ENCODE measurements at regions of chrX and their contacts with region 1.

Region 1: GRCh38 chrX:77910108-77910840 is at the start of gene ATP7A:
- DNase-seq: peak; percentile 95
- H3K4me3 ChIP-seq: peak within 1 kb of the TSS; percentile 57 to 67 (median 62)
- H3K27ac ChIP-seq: peak within 1 kb of the TSS; percentile 77 to 86 (median 81)
- H3K4me1 ChIP-seq: peaks cover 0 to 20% (median 11%) of the 10 kb centered on the region in 4 donors
- H3K27me3 ChIP-seq: peaks cover 0 to 7% (median 0%) of the 10 kb centered on the region in 4 donors
- CTCF ChIP-seq: peak; percentile 56 to 73 (median 61)
- EP300 ChIP-seq: no peak
- POLR2A ChIP-seq: no peak
- total RNA-seq, gene ATP7A: 10.7 to 14.1 (median 12.8) TPM

Region 2: DNA sequence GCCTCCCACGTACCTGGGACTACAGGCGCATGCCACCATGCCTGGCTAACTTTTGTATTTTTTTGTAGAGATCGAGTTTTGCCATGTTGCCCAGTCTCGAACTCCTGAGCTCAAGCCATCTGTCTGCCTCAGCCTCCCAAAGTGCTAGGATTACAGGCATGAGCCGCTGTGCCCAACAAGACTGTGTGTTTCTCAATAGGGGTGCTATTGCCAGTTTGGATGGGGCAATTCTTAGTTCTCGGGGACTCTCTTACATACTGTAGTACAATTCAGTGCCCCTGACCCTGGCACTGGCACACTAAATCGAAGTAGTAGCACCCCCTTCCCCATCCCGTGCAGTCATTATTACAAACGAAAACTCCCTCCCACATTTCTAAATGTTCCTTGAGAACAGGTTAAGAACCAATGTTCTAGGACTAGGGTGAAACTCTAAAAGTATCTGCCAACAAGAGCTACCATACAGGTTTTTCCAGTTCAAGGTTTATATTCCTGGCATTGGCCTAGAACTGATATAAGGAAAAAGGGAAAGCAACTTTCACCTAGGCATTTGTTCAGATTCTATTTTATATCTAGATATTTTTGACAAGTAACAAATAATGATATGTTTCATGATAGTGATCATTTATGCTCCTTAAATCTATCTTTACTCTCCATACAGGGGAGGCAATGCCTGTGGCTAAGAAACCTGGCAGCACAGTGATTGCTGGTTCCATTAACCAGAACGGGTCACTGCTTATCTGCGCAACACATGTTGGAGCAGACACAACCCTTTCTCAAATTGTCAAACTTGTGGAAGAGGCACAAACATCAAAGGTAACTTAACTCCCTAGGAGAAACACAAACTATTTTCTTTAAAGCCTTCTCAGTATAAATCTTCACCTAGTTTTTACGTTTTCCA is 109.6 kb after region 1 on chrX:
- intact Hi-C with region 1: loop called (anchors 5 kb)
- DNase-seq: no peak
- H3K4me3 ChIP-seq: no peak overlapping the region
- H3K27ac ChIP-seq: no peak overlapping the region
- H3K4me1 ChIP-seq: no peaks in the 10 kb centered on the region
- H3K27me3 ChIP-seq: no peaks in the 10 kb centered on the region
- CTCF ChIP-seq: no peak
- EP300 ChIP-seq: no peak
- POLR2A ChIP-seq: no peak

Region 3: DNA sequence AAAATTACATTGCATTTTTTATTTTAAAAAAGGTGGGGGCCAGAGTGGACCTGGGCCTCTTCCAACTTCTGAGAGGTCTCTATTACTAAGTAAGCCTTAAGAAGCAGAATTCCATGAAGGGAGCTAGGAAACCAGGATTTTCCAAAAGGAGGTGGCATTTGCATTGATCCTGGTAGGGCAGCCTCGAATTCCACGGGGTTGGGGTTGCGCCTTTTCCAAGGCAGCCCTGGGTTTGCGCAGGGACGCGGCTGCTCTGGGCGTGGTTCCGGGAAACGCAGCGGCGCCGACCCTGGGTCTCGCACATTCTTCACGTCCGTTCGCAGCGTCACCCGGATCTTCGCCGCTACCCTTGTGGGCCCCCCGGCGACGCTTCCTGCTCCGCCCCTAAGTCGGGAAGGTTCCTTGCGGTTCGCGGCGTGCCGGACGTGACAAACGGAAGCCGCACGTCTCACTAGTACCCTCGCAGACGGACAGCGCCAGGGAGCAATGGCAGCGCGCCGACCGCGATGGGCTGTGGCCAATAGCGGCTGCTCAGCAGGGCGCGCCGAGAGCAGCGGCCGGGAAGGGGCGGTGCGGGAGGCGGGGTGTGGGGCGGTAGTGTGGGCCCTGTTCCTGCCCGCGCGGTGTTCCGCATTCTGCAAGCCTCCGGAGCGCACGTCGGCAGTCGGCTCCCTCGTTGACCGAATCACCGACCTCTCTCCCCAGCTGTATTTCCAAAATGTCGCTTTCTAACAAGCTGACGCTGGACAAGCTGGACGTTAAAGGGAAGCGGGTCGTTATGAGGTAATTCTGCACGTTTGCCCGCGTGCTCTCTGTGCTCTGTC is 193.6 kb after region 1 on chrX and contains the start of gene PGK1:
- intact Hi-C with region 1: loop called (anchors 5 kb)
- DNase-seq: peak; percentile 98
- H3K4me3 ChIP-seq: peak within 1 kb of the TSS; percentile 67 to 83 (median 70)
- H3K27ac ChIP-seq: peak within 1 kb of the TSS; percentile 88 to 97 (median 96)
- H3K4me1 ChIP-seq: peaks cover 10 to 41% (median 33%) of the 10 kb centered on the region in 4 donors
- H3K27me3 ChIP-seq: peaks cover 0 to 5% (median 0%) of the 10 kb centered on the region in 4 donors
- CTCF ChIP-seq: no peak
- EP300 ChIP-seq: peak; percentile 70
- POLR2A ChIP-seq: peak; percentile 87
- total RNA-seq, gene PGK1: 187 to 236 (median 229) TPM